HEK293T (cell line): ENCODE measurements at regions of chr6 and their contacts with region 1.

Region 1: DNA sequence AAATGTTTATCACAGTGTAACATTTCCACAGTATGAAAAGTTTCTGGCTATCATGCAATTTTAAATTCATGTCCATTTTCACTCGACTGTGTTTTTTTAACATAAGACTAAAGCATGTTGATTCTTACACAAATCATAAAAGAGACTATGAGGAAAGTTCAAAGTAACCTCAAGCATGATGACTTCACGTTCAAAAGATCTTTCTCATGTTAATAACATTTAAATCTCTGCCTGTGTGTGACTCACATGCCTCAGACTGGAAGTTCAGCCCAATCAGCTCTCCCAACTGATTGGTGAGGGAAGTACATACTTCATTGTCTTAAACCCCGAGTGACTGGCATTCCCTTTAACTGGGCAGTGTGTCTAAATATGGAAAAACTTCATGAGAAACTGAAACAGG is 37.4 kb downstream of the ATXN1 start:
- DNase-seq: no peak

Region 2: GRCh38 chr6:16712931-16713484 is 10.8 kb before region 1 on chr6:
- CTCF ChIA-PET with region 1: interaction called, 10 read pairs
- POLR2A ChIA-PET with region 1: no interaction called
- DNase-seq: peak; percentile 35

Region 3: GRCh38 chr6:16761471-16762267 is 37.8 kb after region 1 on chr6:
- CTCF ChIA-PET with region 1: interaction called, 8 read pairs
- POLR2A ChIA-PET with region 1: interaction called, 19 read pairs
- DNase-seq: peak; percentile 62

Region 4: GRCh38 chr6:16803294-16804200 is 79.7 kb after region 1 on chr6:
- CTCF ChIA-PET with region 1: no interaction called
- POLR2A ChIA-PET with region 1: no interaction called
- DNase-seq: peak; percentile 75